ENCODE measurements at regions of chr1 and their contacts with region 1.

Region 1: GRCh38 chr1:67214420-67215174 is 48.3 kb downstream of the IL23R start:
- DNase-seq: peak in 31 of 35 experiments; percentile 9 to 64 (median 39)
- ATAC-seq: peak in 1 of 4 experiments; percentile 31
- H3K4me3 ChIP-seq: no peak overlapping the region
- H3K4me3 Mint-ChIP-seq: no peak overlapping the region
- H3K27ac ChIP-seq: no peak overlapping the region
- H3K27ac Mint-ChIP-seq: no peak overlapping the region
- H3K4me1 ChIP-seq: peaks cover 10 to 14% of the 10 kb centered on the region in 2 experiments
- H3K4me1 Mint-ChIP-seq: peaks cover 23 to 26% (median 25%) of the 10 kb centered on the region in 3 donors
- H3K27me3 ChIP-seq: no peaks in the 10 kb centered on the region
- H3K27me3 Mint-ChIP-seq: no peaks in the 10 kb centered on the region

Region 2: GRCh38 chr1:66764994-66765578 is 449.5 kb before region 1 on chr1:
- CTCF ChIA-PET with region 1: interaction called, 9 to 35 read pairs
- POLR2A ChIA-PET with region 1: no interaction called
- DNase-seq: peak in 30 of 35 experiments; percentile 10 to 76 (median 44)
- ATAC-seq: peak; percentile 58 to 74 (median 68)
- H3K4me3 ChIP-seq: no peak overlapping the region
- H3K4me3 Mint-ChIP-seq: no peak overlapping the region
- H3K27ac ChIP-seq: no peak overlapping the region
- H3K27ac Mint-ChIP-seq: no peak overlapping the region
- H3K4me1 ChIP-seq: peaks cover 0 to 6% of the 10 kb centered on the region in 2 experiments
- H3K4me1 Mint-ChIP-seq: peaks cover 14 to 19% (median 17%) of the 10 kb centered on the region in 3 donors
- H3K27me3 ChIP-seq: no peaks in the 10 kb centered on the region
- H3K27me3 Mint-ChIP-seq: peaks cover 0 to 3% of the 10 kb centered on the region in 2 donors

Region 3: GRCh38 chr1:67052702-67053534 is 161.7 kb before region 1 on chr1:
- CTCF ChIA-PET with region 1: interaction called, 6 to 10 read pairs
- POLR2A ChIA-PET with region 1: interaction called in 1 of 2 experiments, 5 read pairs
- DNase-seq: peak in 22 of 35 experiments; percentile 0 to 53 (median 22)
- ATAC-seq: no peak
- H3K4me3 ChIP-seq: peak overlapping the region; percentile 88 to 92
- H3K4me3 Mint-ChIP-seq: peak overlapping the region; percentile 85 to 89 (median 87)
- H3K27ac ChIP-seq: peak overlapping the region; percentile 62
- H3K27ac Mint-ChIP-seq: peak overlapping the region; percentile 83 to 88
- H3K4me1 ChIP-seq: peaks cover 10 to 11% of the 10 kb centered on the region in 2 experiments
- H3K4me1 Mint-ChIP-seq: peaks cover 30 to 34% (median 30%) of the 10 kb centered on the region in 3 donors
- H3K27me3 ChIP-seq: no peaks in the 10 kb centered on the region
- H3K27me3 Mint-ChIP-seq: no peaks in the 10 kb centered on the region

Region 4: DNA sequence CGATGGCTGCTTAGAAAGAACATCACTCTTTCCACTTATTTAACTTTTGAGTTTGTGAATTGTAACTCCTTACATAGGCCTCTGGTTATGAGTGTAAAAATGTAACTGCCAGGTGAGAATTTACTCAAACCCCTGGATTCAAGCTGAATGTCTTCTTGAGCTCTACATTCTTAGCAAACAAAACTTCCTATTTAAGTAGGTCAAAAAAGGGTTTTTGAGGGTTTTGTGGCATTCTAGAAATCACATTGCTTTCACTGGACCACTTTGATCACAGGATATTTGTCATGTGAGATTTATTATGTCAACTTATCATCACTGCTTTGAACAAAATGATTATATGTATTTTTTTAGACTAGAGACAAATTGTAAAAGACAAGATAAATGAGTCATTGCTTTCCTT is 42.6 kb before region 1 on chr1:
- CTCF ChIA-PET with region 1: interaction called, 4 to 17 read pairs
- POLR2A ChIA-PET with region 1: no interaction called
- DNase-seq: peak in 1 of 35 experiments; percentile 72
- ATAC-seq: peak; percentile 48 to 58 (median 54)
- H3K4me3 ChIP-seq: no peak overlapping the region
- H3K4me3 Mint-ChIP-seq: peak overlapping the region; percentile 14 to 69 (median 54)
- H3K27ac ChIP-seq: peak overlapping the region; percentile 70
- H3K27ac Mint-ChIP-seq: peak overlapping the region; percentile 43 to 60
- H3K4me1 ChIP-seq: peaks cover 14 to 38% of the 10 kb centered on the region in 2 experiments
- H3K4me1 Mint-ChIP-seq: peaks cover 29 to 69% (median 55%) of the 10 kb centered on the region in 3 donors
- H3K27me3 ChIP-seq: peaks cover 0 to 2% of the 10 kb centered on the region in 2 experiments
- H3K27me3 Mint-ChIP-seq: peaks cover 0 to 3% of the 10 kb centered on the region in 2 donors

Region 5: DNA sequence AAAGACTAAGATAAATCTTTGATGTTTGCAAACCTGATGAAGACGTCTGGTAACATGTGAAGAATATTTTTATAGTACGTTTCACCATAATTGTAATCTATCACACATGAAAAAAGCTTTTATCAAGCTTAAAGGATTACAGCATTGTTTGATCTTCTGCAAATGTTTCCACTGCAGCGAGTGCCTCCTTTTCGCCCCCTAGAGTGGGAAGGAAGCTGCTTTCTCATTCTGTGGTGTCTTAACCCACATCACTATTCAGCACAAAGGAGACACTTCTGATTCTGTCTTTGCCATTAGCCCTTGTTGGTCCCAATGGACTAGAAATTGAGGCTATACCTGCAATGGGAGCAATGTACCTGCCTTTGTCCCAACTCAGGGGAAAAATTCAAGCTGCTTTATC is 47.1 kb after region 1 on chr1:
- CTCF ChIA-PET with region 1: interaction called, 10 to 14 read pairs
- POLR2A ChIA-PET with region 1: no interaction called
- DNase-seq: peak in 28 of 35 experiments; percentile 0 to 52 (median 24)
- ATAC-seq: peak in 3 of 4 experiments; percentile 81 to 95 (median 82)
- H3K4me3 ChIP-seq: no peak overlapping the region
- H3K4me3 Mint-ChIP-seq: peak overlapping the region in 1 of 3 donors; percentile 10
- H3K27ac ChIP-seq: no peak overlapping the region
- H3K27ac Mint-ChIP-seq: no peak overlapping the region
- H3K4me1 ChIP-seq: peaks cover 8 to 24% of the 10 kb centered on the region in 2 experiments
- H3K4me1 Mint-ChIP-seq: peaks cover 28 to 36% (median 30%) of the 10 kb centered on the region in 3 donors
- H3K27me3 ChIP-seq: no peaks in the 10 kb centered on the region
- H3K27me3 Mint-ChIP-seq: no peaks in the 10 kb centered on the region

Region 6: DNA sequence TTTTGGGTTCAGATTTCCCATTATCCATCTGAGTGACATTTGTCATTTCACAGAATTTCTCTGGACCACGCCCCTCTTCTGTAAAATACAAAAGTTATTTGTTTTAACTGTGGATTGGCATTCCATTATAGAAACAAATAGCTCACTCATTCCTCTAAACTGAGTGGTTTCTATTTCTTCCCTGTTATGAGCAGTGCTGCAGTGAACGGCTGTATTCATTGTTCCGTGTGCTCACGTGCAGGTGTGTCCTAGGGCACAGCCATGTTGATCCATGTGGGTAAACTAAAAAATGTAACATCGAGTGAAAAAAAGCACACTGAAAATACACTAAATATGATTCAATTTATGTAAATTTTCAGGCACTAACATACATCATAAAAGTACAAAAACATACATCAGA is 66.1 kb after region 1 on chr1:
- CTCF ChIA-PET with region 1: no interaction called
- POLR2A ChIA-PET with region 1: no interaction called
- DNase-seq: no peak
- ATAC-seq: no peak
- H3K4me3 ChIP-seq: no peak overlapping the region
- H3K4me3 Mint-ChIP-seq: no peak overlapping the region
- H3K27ac ChIP-seq: no peak overlapping the region
- H3K27ac Mint-ChIP-seq: no peak overlapping the region
- H3K4me1 ChIP-seq: no peaks in the 10 kb centered on the region
- H3K4me1 Mint-ChIP-seq: peaks cover 0 to under 1% (median 0%) of the 10 kb centered on the region in 3 donors
- H3K27me3 ChIP-seq: no peaks in the 10 kb centered on the region
- H3K27me3 Mint-ChIP-seq: no peaks in the 10 kb centered on the region

Measured in T-cell (primary cell).